ENCODE measurements at regions of chr2 and their contacts with region 1.

Region 1: GRCh38 chr2:161273038-161273760 is 35.0 kb upstream of the PSMD14 start:
- DNase-seq: peak in 1 of 2 donors; percentile 67
- H3K4me3 ChIP-seq: no peak overlapping the region
- H3K27ac ChIP-seq: no peak overlapping the region
- H3K4me1 ChIP-seq: no peaks in the 10 kb centered on the region
- H3K27me3 ChIP-seq: no peaks in the 10 kb centered on the region
- CTCF ChIP-seq: peak in 5 of 7 experiments; percentile 14 to 69 (median 53)
- EP300 ChIP-seq: no peak
- POLR2A ChIP-seq: no peak

Region 2: DNA sequence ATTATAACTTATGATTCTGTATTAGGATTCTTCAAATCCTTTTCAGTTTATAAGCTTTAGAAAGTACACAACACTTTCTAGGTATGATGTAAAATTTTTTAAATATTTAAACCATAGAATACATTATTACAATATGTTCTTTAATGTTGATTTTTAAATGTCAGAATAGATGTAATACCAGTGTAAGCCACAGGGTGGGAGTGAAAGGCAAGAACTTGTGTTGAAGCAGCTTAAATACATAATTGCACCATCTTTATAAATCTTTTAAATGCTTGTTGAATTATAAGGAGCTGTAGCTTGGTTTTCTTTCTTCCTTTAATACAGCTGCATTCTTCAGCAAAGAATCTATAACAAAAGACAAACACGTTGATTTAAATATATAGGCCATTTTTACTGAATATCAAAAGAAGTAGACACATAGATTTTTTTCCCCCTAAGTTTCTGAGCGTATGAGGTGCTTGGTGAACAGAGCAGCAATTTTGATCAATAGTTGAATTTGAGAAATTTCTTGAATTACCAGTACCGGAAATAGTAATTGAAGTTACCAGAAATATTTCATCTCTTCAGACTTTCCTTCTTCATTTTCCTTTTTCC is 50.0 kb before region 1 on chr2:
- intact Hi-C with region 1: loop called (anchors 10 kb)
- DNase-seq: peak in 1 of 2 donors; percentile 66
- H3K4me3 ChIP-seq: no peak overlapping the region
- H3K27ac ChIP-seq: no peak overlapping the region
- H3K4me1 ChIP-seq: no peaks in the 10 kb centered on the region
- H3K27me3 ChIP-seq: no peaks in the 10 kb centered on the region
- CTCF ChIP-seq: peak in 4 of 7 experiments; percentile 48 to 86 (median 61)
- EP300 ChIP-seq: no peak
- POLR2A ChIP-seq: no peak

Region 3: GRCh38 chr2:161352719-161353118 is 79.5 kb after region 1 on chr2:
- intact Hi-C with region 1: no loop called
- DNase-seq: no peak
- H3K4me3 ChIP-seq: no peak overlapping the region
- H3K27ac ChIP-seq: no peak overlapping the region
- H3K4me1 ChIP-seq: peaks cover 0 to 14% (median 4%) of the 10 kb centered on the region in 4 donors
- H3K27me3 ChIP-seq: no peaks in the 10 kb centered on the region
- CTCF ChIP-seq: no peak
- EP300 ChIP-seq: no peak
- POLR2A ChIP-seq: no peak